Cardiac septum (tissue), 1 donor: ENCODE measurements at regions of chr12 and their contacts with region 1.

Region 1: GRCh38 chr12:76559400-76560085 is at the start of gene OSBPL8:
- DNase-seq: peak; percentile 99
- total RNA-seq, gene OSBPL8: 43.2 TPM

Region 2: GRCh38 chr12:76083904-76084862 is 475.4 kb before region 1 on chr12 and contains the start of gene NAP1L1:
- intact Hi-C with region 1: loop called (anchors 10 kb)
- DNase-seq: peak; percentile 98
- total RNA-seq, gene NAP1L1: 348 TPM

Region 3: GRCh38 chr12:76462668-76463224 is 96.8 kb before region 1 on chr12:
- intact Hi-C with region 1: loop called (anchors 5 kb)
- DNase-seq: no peak